ENCODE measurements at regions of chrX and their contacts with region 1.

Region 1: GRCh38 chrX:37441377-37441776 is 92.2 kb downstream of the PRRG1 start:
- DNase-seq: no peak
- ATAC-seq: no peak
- H3K4me3 ChIP-seq: no peak overlapping the region
- H3K27ac ChIP-seq: no peak overlapping the region
- H3K4me1 ChIP-seq: no peaks in the 10 kb centered on the region
- H3K27me3 ChIP-seq: peaks cover 0 to 6% (median 0%) of the 10 kb centered on the region in 7 donors
- CTCF ChIP-seq: no peak

Region 2: GRCh38 chrX:36087366-36087765 is 1354.0 kb before region 1 on chrX:
- intact Hi-C with region 1: loop called in 1 of 10 experiments (anchors 10 kb)
- DNase-seq: no peak
- ATAC-seq: no peak
- H3K4me3 ChIP-seq: no peak overlapping the region
- H3K27ac ChIP-seq: no peak overlapping the region
- H3K4me1 ChIP-seq: no peaks in the 10 kb centered on the region
- H3K27me3 ChIP-seq: no peaks in the 10 kb centered on the region
- CTCF ChIP-seq: no peak